ENCODE measurements at regions of chr7 and their contacts with region 1.

Region 1: GRCh38 chr7:111741811-111742240 is 179.5 kb upstream of the IMMP2L start:
- DNase-seq: no peak
- H3K4me3 ChIP-seq: no peak overlapping the region
- H3K27ac ChIP-seq: no peak overlapping the region
- H3K4me1 ChIP-seq: no peaks in the 10 kb centered on the region
- H3K27me3 ChIP-seq: no peaks in the 10 kb centered on the region
- CTCF ChIP-seq: peak; percentile 19 to 68 (median 59)
- POLR2A ChIP-seq: no peak

Region 2: GRCh38 chr7:111855161-111855856 is 113.5 kb after region 1 on chr7:
- intact Hi-C with region 1: no loop called
- DNase-seq: no peak
- H3K4me3 ChIP-seq: no peak overlapping the region
- H3K27ac ChIP-seq: no peak overlapping the region
- H3K4me1 ChIP-seq: no peaks in the 10 kb centered on the region
- H3K27me3 ChIP-seq: no peaks in the 10 kb centered on the region
- CTCF ChIP-seq: no peak
- POLR2A ChIP-seq: no peak

Region 3: DNA sequence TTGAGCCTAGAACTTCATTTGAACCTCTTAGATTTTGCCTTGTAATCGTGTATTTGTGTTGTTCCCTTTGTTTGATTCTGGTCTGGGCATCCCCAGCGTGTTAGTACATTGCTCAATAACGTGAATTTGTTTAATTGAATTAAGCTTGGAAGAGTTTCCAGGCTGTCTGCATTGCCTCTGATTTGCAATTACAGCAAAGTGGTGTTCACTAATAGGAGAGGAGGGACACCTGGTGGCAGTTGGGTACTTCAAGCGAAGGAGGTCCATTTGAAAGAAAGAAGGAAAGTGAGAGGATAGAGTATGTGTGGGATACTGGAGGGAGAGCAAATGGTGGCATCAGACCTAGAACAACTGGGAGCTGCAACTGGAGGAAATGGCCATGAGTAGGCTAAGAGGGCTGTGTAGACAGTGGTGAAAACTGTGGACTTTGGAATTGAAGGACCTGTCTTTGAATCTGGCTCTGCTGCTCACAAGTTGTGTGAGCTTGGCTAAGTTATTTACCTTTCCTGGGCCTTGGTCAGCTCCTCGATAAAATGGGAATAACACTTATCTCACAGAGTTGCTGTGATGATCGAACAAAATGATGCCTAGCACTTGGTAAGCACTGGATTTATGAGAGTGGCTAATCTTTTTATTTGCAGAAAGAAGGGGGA is 754.1 kb after region 1 on chr7:
- intact Hi-C with region 1: loop called (anchors 10 kb)
- DNase-seq: no peak
- H3K4me3 ChIP-seq: no peak overlapping the region
- H3K27ac ChIP-seq: no peak overlapping the region
- H3K4me1 ChIP-seq: peaks cover 6% of the 10 kb centered on the region
- H3K27me3 ChIP-seq: no peaks in the 10 kb centered on the region
- CTCF ChIP-seq: peak; percentile 40 to 74 (median 62)
- POLR2A ChIP-seq: no peak

Measured in vagina (tissue), 2 donors.